PC-3 (cell line): ENCODE measurements at regions of chr14 and their contacts with region 1.

Region 1: GRCh38 chr14:32576088-32576795 is 247.1 kb downstream of the AKAP6 start:
- DNase-seq: peak; percentile 75
- ATAC-seq: peak; percentile 95
- H3K4me3 ChIP-seq: no peak overlapping the region
- H3K27ac ChIP-seq: no peak overlapping the region
- H3K4me1 ChIP-seq: no peaks in the 10 kb centered on the region
- H3K27me3 ChIP-seq: no peaks in the 10 kb centered on the region
- CTCF ChIP-seq: peak; percentile 96

Region 2: DNA sequence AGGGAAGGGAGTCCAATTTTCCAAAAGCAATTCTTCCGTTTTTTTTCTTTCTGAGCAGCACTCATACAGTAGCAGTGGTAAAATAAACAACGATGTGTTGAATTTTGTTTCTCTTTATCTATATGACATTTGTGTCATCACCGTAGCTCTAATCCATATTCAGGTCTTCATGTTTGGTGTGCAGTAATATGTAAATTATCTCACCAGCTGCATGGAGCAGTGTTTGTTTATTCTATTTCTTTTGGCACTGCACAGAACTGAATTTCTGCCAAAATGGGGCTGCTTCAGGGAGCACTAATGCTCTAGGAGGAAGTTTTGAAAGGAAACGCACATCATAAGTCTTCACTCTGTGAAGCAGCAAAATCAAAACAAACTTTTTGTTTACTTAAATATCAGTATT is 232.4 kb after region 1 on chr14:
- CTCF ChIA-PET with region 1: no interaction called
- POLR2A ChIA-PET with region 1: no interaction called
- intact Hi-C with region 1: no loop called
- DNase-seq: peak; percentile 51
- ATAC-seq: peak; percentile 89
- H3K4me3 ChIP-seq: no peak overlapping the region
- H3K27ac ChIP-seq: no peak overlapping the region
- H3K4me1 ChIP-seq: 0 out of 2 replicates have a peak, but pooled peaks cover 3% of the 10 kb centered on the region
- H3K27me3 ChIP-seq: no peaks in the 10 kb centered on the region
- CTCF ChIP-seq: no peak

Region 3: GRCh38 chr14:33432407-33433023 is 856.3 kb after region 1 on chr14:
- CTCF ChIA-PET with region 1: no interaction called
- POLR2A ChIA-PET with region 1: no interaction called
- intact Hi-C with region 1: loop called (anchors 1 kb)
- DNase-seq: peak; percentile 71
- ATAC-seq: peak; percentile 54
- H3K4me3 ChIP-seq: no peak overlapping the region
- H3K27ac ChIP-seq: no peak overlapping the region
- H3K4me1 ChIP-seq: peaks cover 12% of the 10 kb centered on the region
- H3K27me3 ChIP-seq: no peaks in the 10 kb centered on the region
- CTCF ChIP-seq: peak; percentile 82

Region 4: GRCh38 chr14:33839193-33840076 is 1263.2 kb after region 1 on chr14:
- CTCF ChIA-PET with region 1: no interaction called
- POLR2A ChIA-PET with region 1: no interaction called
- intact Hi-C with region 1: loop called (anchors 5 kb)
- DNase-seq: peak; percentile 69
- ATAC-seq: peak; percentile 83
- H3K4me3 ChIP-seq: no peak overlapping the region
- H3K27ac ChIP-seq: no peak overlapping the region
- H3K4me1 ChIP-seq: no peaks in the 10 kb centered on the region
- H3K27me3 ChIP-seq: peaks cover 17% of the 10 kb centered on the region; the same call in 1 of the 2 replicates
- CTCF ChIP-seq: peak; percentile 93

Region 5: DNA sequence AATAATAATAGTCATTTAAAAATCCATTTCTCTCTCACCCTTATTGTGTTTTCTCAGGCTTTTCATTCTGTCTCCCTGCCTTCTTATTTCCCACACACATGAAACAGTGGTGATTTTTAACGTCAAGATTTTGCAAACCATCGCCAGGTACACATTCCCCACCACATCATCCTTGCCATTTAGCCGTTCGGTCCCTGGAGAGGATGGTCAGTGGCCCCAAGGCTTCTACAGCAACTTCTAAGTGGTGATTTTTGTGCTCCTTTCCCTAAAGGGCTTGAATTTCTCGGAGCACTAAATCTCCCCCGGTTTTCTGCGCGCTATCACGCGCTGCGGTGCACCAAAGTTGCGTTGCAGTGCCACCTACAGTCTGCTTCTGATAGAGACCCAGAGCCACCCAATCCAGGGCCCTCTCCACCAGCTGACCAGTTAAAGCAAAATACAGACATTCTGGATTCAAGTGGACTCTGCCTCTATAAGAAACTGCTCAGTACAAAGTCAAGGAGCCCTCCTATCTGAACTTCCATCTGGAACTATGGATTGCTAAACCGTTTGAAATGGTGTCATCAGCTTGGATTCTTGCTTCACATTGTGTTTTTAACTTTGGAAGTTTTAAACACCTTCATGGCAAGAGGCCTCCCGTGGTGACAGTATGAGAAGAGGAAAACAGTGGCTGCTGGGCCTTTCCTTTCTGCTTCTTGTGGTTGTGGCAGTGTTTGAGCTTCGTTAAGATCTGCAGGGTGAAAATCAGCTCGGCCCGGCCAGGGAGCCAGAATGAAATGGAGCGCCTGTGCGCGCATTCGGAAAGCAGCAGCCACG is 1651.8 kb after region 1 on chr14:
- CTCF ChIA-PET with region 1: no interaction called
- POLR2A ChIA-PET with region 1: no interaction called
- intact Hi-C with region 1: loop called (anchors 5 kb)
- DNase-seq: peak; percentile 81
- ATAC-seq: peak; percentile 99
- H3K4me3 ChIP-seq: peak overlapping the region; percentile 52
- H3K27ac ChIP-seq: no peak overlapping the region
- H3K4me1 ChIP-seq: peaks cover 14% of the 10 kb centered on the region
- H3K27me3 ChIP-seq: no peaks in the 10 kb centered on the region
- CTCF ChIP-seq: peak; percentile 91

Region 6: GRCh38 chr14:34496679-34497513 is 1920.7 kb after region 1 on chr14:
- CTCF ChIA-PET with region 1: no interaction called
- POLR2A ChIA-PET with region 1: no interaction called
- intact Hi-C with region 1: loop called (anchors 10 kb)
- DNase-seq: peak; percentile 98
- ATAC-seq: peak; percentile 94
- H3K4me3 ChIP-seq: peak overlapping the region; percentile 20; the same call in 1 of the 2 replicates
- H3K27ac ChIP-seq: peak overlapping the region; percentile 94
- H3K4me1 ChIP-seq: peaks cover 26% of the 10 kb centered on the region
- H3K27me3 ChIP-seq: no peaks in the 10 kb centered on the region
- CTCF ChIP-seq: peak; percentile 70